BJ (cell line): ENCODE measurements at regions of chr1 and their contacts with region 1.

Region 1: DNA sequence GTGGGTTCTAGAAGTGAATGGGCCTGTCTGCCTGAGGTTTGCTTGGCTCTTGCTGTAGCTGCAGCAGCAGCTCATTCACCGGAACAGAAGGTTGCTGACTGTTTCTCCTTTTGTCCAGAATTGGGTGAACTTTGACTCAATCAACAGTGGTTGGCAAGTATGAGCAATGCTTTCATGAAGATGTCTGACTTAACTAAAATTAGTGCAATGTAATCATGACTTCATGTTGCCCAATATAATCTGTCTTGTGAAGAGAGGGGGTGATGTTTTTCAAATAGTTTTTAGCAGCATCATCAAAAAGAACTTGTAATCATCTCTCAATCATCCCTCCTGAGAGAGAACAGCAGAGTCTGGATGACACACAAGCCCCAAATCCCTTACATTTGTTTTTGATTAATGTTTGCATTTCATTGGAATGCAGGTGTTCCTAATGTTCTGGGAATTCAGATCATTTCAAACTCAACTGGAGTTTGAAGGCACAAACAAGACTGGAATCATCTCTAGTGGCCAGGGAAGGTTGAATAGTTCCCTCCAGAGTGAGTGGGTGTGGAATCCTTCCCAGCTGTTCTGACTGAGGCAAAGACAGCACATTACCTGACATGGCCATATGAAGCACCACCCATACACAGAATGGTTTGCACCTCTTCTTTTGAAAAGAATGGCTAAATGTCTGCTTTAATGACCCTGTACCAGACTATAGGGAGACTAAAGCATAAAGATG is 82.9 kb downstream of the HLX start:
- DNase-seq: peak; percentile 94
- H3K4me3 ChIP-seq: no peak overlapping the region
- H3K27me3 ChIP-seq: no peaks in the 10 kb centered on the region
- CTCF ChIP-seq: no peak

Region 2: DNA sequence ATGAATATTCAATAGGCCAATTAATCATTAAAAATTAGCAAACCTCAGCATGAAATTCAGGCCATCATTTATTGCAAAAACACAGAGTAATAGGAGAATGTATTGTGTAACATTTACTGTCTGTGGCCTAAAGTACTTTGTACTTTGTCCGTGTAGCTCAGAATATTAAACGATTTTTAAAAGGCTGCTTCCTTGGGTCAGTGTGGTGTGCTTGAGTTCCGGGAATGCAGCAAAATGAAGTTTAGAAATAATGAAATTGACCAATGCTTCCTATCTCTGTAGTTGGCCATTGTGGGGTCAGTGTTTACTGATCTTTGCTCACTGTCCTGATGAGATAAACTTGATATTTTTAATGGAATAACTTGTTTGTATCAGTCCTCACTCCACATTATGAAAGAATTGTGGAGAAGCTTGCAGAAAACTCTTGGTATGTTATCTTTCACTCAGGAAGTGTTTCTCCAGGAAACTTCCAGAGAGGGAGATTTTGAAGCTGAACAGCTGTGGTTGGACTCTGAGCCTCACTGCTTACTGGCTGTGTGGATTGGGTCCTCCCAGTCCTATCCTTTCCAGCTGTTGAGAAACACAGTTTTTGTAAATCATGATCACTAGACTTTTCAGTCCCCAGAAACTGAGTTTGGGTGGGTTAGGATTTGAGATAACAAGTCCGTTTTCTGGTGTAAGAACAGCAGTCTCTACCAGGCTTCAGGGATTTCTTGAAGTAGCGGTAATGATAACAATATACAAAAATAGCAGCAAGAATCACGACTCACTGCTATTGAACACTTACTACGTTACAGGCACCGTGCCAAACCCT is 194.7 kb before region 1 on chr1:
- CTCF ChIA-PET with region 1: no interaction called
- POLR2A ChIA-PET with region 1: no interaction called
- DNase-seq: no peak
- H3K4me3 ChIP-seq: no peak overlapping the region
- H3K27me3 ChIP-seq: no peaks in the 10 kb centered on the region
- CTCF ChIP-seq: no peak

Region 3: GRCh38 chr1:220918285-220918951 is 43.8 kb before region 1 on chr1:
- CTCF ChIA-PET with region 1: interaction called, 3 read pairs
- POLR2A ChIA-PET with region 1: interaction called, 14 read pairs
- DNase-seq: no peak
- H3K4me3 ChIP-seq: no peak overlapping the region
- H3K27me3 ChIP-seq: no peaks in the 10 kb centered on the region
- CTCF ChIP-seq: no peak